Aorta (tissue), 5 donors: ENCODE measurements at regions of chr5 and their contacts with region 1.

Region 1: GRCh38 chr5:153562189-153562588 is 71.7 kb downstream of the GRIA1 start:
- DNase-seq: no peak
- ATAC-seq: no peak
- H3K4me3 ChIP-seq: no peak overlapping the region
- H3K27ac ChIP-seq: no peak overlapping the region
- H3K4me1 ChIP-seq: peaks cover 0 to 3% of the 10 kb centered on the region in 2 donors
- H3K27me3 ChIP-seq: no peaks in the 10 kb centered on the region

Region 2: DNA sequence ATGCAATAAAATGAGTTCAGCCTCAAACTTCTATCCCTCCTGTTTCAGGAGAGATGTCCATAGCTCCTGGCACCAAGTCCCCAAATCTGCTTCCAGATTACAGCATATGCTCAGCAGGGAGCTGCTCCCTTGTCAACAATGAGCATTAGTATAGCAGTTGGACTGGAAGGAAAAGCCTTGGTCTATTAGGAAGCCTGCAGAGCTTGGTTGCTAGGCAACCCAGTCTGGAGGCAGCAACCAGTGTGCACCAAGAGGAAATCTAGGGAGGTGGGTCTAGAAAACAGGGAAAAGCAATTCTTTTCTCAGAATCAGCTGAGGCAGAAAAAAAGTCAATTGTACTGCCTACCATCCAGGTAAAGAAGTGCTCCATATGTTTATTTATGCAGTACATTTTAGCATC is 927.6 kb before region 1 on chr5:
- intact Hi-C with region 1: loop called (anchors 10 kb)
- DNase-seq: peak in 1 of 2 donors; percentile 45
- ATAC-seq: peak; percentile 36
- H3K4me3 ChIP-seq: no peak overlapping the region
- H3K27ac ChIP-seq: peak overlapping the region; percentile 86 to 87
- H3K4me1 ChIP-seq: peaks cover 6 to 18% of the 10 kb centered on the region in 2 donors
- H3K27me3 ChIP-seq: no peaks in the 10 kb centered on the region

Region 3: GRCh38 chr5:153257381-153257780 is 304.8 kb before region 1 on chr5:
- intact Hi-C with region 1: no loop called
- DNase-seq: no peak
- ATAC-seq: no peak
- H3K4me3 ChIP-seq: no peak overlapping the region
- H3K27ac ChIP-seq: no peak overlapping the region
- H3K4me1 ChIP-seq: no peaks in the 10 kb centered on the region
- H3K27me3 ChIP-seq: no peaks in the 10 kb centered on the region

Region 4: DNA sequence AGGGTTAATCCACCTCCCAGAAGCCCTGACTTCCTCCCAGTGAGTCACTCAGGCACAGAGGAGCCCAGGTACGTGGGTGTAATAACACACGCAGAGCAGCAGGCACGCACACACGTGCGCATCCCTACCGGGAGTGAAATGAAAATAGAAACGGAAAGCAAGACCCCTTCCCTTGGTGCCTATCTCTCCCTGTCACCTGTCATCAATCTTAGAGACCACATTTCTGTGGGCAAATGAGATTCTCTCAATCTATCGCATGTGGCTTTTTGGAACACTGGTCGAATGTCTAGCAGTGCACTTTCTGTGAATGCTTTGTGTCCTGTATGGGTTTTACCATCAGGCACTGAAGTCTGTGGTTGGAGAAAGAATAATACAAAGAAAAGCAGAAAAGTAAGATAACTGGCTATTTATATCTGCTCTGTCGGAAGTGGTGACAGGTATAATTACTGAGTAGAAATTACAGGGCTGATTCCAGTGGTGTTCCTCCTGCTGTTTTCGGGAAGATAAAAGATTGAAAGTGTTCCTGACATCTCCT is 209.4 kb before region 1 on chr5:
- intact Hi-C with region 1: no loop called
- DNase-seq: no peak
- ATAC-seq: no peak
- H3K4me3 ChIP-seq: peak overlapping the region; percentile 42 to 66
- H3K27ac ChIP-seq: no peak overlapping the region
- H3K4me1 ChIP-seq: peaks cover 0 to 5% of the 10 kb centered on the region in 2 donors
- H3K27me3 ChIP-seq: no peaks in the 10 kb centered on the region

Region 5: DNA sequence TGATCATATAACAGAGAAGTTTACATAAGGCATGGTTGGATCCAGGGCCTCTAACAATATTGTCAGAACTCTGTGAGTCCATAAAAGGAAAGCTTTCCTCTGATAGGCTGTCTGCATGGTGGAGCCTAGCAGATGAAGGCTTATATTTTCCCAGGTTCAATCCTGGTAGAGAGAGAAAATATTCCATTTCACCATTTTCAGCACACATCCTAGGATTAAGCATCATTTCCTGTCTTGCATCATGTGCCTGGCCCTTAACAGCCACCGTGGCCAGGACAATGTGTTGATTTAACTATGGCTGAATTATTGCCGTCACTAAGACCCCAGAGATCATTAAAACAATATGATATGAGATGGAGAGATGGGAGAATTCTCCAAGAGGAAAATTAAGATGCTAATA is 162.6 kb before region 1 on chr5:
- intact Hi-C with region 1: loop called in 1 of 2 experiments (anchors 10 kb)
- DNase-seq: no peak
- ATAC-seq: peak; percentile 33
- H3K4me3 ChIP-seq: no peak overlapping the region
- H3K27ac ChIP-seq: peak overlapping the region; percentile 57 to 59
- H3K4me1 ChIP-seq: peaks cover 0 to 10% of the 10 kb centered on the region in 2 donors
- H3K27me3 ChIP-seq: no peaks in the 10 kb centered on the region

Region 6: GRCh38 chr5:153445851-153446579 is 116.2 kb before region 1 on chr5:
- intact Hi-C with region 1: loop called in 1 of 2 experiments (anchors 5 kb)
- DNase-seq: peak; percentile 62 to 74
- ATAC-seq: peak; percentile 73
- H3K4me3 ChIP-seq: no peak overlapping the region
- H3K27ac ChIP-seq: peak overlapping the region; percentile 48 to 52
- H3K4me1 ChIP-seq: no peaks in the 10 kb centered on the region
- H3K27me3 ChIP-seq: no peaks in the 10 kb centered on the region

Region 7: GRCh38 chr5:153704110-153704509 is 141.9 kb after region 1 on chr5:
- intact Hi-C with region 1: no loop called
- DNase-seq: no peak
- ATAC-seq: no peak
- H3K4me3 ChIP-seq: no peak overlapping the region
- H3K27ac ChIP-seq: no peak overlapping the region
- H3K4me1 ChIP-seq: no peaks in the 10 kb centered on the region
- H3K27me3 ChIP-seq: no peaks in the 10 kb centered on the region

Region 8: DNA sequence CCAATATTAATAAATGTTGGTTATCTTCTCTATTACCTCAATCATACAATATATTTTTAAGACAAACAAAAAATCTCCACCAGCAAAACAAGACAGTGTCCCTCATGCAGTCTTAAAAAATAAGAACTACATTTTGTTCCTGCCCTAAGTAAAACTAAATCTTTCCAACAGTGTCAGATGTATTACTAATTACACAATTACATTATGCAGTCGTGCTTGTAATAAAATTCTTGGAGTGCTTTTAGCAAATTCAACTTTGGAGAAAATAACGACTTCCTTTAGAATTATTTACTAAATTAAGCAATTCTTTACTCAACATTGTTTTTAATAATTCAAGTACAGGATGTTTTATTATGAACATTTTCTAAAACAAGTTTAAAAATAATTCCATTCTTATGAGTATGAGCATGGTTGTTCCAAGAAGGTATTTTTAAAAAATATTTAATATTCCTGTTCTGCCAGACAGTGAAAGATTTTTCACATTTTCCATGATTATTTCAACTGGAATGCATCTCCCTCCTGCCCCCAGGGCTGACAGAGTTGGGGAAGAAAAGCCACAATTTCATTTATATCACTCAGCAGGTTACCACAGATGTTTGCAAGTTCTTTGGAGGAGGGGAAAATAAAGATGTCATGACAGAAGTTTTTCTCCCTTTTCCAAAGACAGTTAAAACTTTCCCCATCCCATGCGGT is 338.7 kb after region 1 on chr5:
- intact Hi-C with region 1: loop called in 1 of 2 experiments (anchors 5 kb)
- DNase-seq: peak in 1 of 2 donors; percentile 41
- ATAC-seq: peak; percentile 64
- H3K4me3 ChIP-seq: no peak overlapping the region
- H3K27ac ChIP-seq: peak overlapping the region in 1 of 2 donors; percentile 29
- H3K4me1 ChIP-seq: peaks cover 5 to 15% of the 10 kb centered on the region in 2 donors
- H3K27me3 ChIP-seq: no peaks in the 10 kb centered on the region